CD4-positive, alpha-beta T cell (primary cell): ENCODE measurements at regions of chr10 and their contacts with region 1.

Region 1: DNA sequence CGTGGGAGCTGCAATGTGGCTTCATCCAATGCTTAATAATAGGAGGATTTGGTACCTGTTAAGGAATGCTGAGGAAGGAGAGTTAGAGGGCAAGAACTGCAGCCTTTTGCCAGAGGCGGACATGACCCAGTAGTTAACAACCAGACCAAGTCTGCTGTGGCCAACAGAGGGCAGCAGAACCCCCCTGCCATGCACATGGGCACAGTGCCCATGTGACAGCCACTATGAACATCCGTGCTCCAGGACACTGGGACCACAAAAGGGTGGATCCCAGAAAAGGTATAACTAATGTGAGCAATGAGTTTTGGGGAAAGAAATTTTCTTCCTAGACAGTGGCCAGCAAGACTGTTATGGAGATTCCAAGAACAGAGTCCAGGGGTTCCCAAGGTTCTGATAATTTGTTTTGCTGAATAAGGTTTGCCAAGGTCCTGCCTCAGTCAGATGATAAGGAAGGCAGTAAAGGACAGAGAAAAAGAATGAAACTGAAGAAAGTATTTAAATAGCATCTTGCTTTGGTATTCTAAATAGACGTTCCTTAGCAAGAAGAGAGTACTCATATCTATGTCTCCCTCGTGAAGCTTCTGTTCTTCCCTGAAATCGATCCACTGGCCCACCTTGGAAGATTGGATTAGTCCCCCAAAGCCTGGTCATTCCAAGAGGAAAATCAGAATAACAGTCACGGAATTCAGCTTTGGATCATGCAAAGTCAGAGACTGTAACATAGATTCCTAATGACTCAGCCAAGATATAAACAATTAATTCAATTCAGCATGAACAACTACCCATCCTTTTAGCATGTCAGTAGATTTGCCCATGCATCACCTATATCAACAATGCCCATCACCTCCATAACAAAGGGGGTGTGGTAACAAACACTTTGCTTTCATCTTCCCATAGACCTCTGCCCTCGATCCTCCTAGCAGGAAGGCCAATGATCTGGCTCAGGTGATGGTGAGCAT is 56.0 kb downstream of the LGI1 start:
- DNase-seq: peak in 11 of 14 experiments; percentile 5 to 51 (median 21)
- ATAC-seq: no peak
- H3K4me3 ChIP-seq: no peak overlapping the region
- H3K4me3 Mint-ChIP-seq: no peak overlapping the region
- H3K27ac ChIP-seq: no peak overlapping the region
- H3K27ac Mint-ChIP-seq: no peak overlapping the region
- H3K4me1 ChIP-seq: no peaks in the 10 kb centered on the region
- H3K4me1 Mint-ChIP-seq: no peaks in the 10 kb centered on the region
- H3K27me3 ChIP-seq: peaks cover 9 to 28% of the 10 kb centered on the region in 2 experiments
- H3K27me3 Mint-ChIP-seq: peaks cover 56% of the 10 kb centered on the region
- CTCF ChIP-seq: peak; percentile 41

Region 2: DNA sequence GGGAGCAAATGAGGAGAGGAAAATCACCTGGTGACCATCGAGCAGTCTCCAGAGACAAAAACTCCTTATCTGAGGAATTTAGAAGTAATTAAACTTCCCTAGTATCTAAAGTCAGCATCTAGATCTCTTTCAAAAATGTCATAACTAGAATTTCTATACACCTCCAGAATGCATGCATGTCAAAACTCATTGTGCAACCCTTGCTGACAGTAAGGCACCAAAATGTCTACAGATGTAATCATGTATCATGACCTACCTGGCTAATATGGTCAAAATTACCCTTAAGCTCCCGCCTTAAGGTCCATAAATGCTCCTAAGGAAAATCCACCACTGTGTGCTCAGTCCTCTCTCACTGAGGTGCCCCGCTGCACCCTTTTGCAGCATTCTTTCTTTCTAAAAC is 72.4 kb before region 1 on chr10:
- CTCF ChIA-PET with region 1: no interaction called
- POLR2A ChIA-PET with region 1: no interaction called
- intact Hi-C with region 1: loop called in 1 of 2 experiments (anchors 2 kb)
- DNase-seq: no peak
- ATAC-seq: no peak
- H3K4me3 ChIP-seq: no peak overlapping the region
- H3K4me3 Mint-ChIP-seq: no peak overlapping the region
- H3K27ac ChIP-seq: no peak overlapping the region
- H3K27ac Mint-ChIP-seq: no peak overlapping the region
- H3K4me1 ChIP-seq: no peaks in the 10 kb centered on the region
- H3K4me1 Mint-ChIP-seq: no peaks in the 10 kb centered on the region
- H3K27me3 ChIP-seq: peaks cover 3 to 8% of the 10 kb centered on the region in 2 experiments
- H3K27me3 Mint-ChIP-seq: peaks cover 17% of the 10 kb centered on the region
- CTCF ChIP-seq: no peak

Region 3: GRCh38 chr10:93916257-93917063 is 102.7 kb after region 1 on chr10:
- CTCF ChIA-PET with region 1: interaction called, 5 read pairs
- POLR2A ChIA-PET with region 1: interaction called, 3 read pairs
- intact Hi-C with region 1: loop called in 1 of 2 experiments (anchors 2 kb)
- DNase-seq: no peak
- ATAC-seq: no peak
- H3K4me3 ChIP-seq: no peak overlapping the region
- H3K4me3 Mint-ChIP-seq: no peak overlapping the region
- H3K27ac ChIP-seq: no peak overlapping the region
- H3K27ac Mint-ChIP-seq: no peak overlapping the region
- H3K4me1 ChIP-seq: no peaks in the 10 kb centered on the region
- H3K4me1 Mint-ChIP-seq: no peaks in the 10 kb centered on the region
- H3K27me3 ChIP-seq: no peaks in the 10 kb centered on the region
- H3K27me3 Mint-ChIP-seq: no peaks in the 10 kb centered on the region
- CTCF ChIP-seq: no peak